ENCODE measurements at regions of chr5 and their contacts with region 1.

Region 1: GRCh38 chr5:140151730-140152597 is 23.0 kb upstream of the CYSTM1 start:
- DNase-seq: no peak
- H3K4me3 ChIP-seq: no peak overlapping the region
- H3K27ac ChIP-seq: no peak overlapping the region
- H3K4me1 ChIP-seq: no peaks in the 10 kb centered on the region
- H3K27me3 ChIP-seq: no peaks in the 10 kb centered on the region
- CTCF ChIP-seq: no peak
- EP300 ChIP-seq: no peak
- POLR2A ChIP-seq: no peak

Region 2: GRCh38 chr5:140084541-140084940 is 67.4 kb before region 1 on chr5:
- intact Hi-C with region 1: loop called in 1 of 4 experiments (anchors 5 kb)
- DNase-seq: no peak
- H3K4me3 ChIP-seq: no peak overlapping the region
- H3K27ac ChIP-seq: no peak overlapping the region
- H3K4me1 ChIP-seq: no peaks in the 10 kb centered on the region
- H3K27me3 ChIP-seq: no peaks in the 10 kb centered on the region
- CTCF ChIP-seq: no peak
- EP300 ChIP-seq: no peak
- POLR2A ChIP-seq: no peak

Measured in ovary (tissue), 10 donors.